ENCODE measurements at regions of chrX and their contacts with region 1.

Region 1: GRCh38 chrX:50100188-50100587 is 100.6 kb downstream of the AKAP4 start:
- DNase-seq: peak; percentile 28
- H3K4me3 Mint-ChIP-seq: no peak overlapping the region
- H3K27ac Mint-ChIP-seq: no peak overlapping the region
- H3K4me1 Mint-ChIP-seq: peaks cover 13% of the 10 kb centered on the region
- H3K27me3 Mint-ChIP-seq: no peaks in the 10 kb centered on the region
- CTCF ChIP-seq: no peak

Region 2: GRCh38 chrX:50448565-50448964 is 348.4 kb after region 1 on chrX:
- CTCF ChIA-PET with region 1: interaction called, 5 read pairs
- intact Hi-C with region 1: loop called (anchors 10 kb)
- DNase-seq: peak; percentile 63
- H3K4me3 Mint-ChIP-seq: no peak overlapping the region
- H3K27ac Mint-ChIP-seq: no peak overlapping the region
- H3K4me1 Mint-ChIP-seq: no peaks in the 10 kb centered on the region
- H3K27me3 Mint-ChIP-seq: peaks cover 2% of the 10 kb centered on the region
- CTCF ChIP-seq: no peak

Region 3: DNA sequence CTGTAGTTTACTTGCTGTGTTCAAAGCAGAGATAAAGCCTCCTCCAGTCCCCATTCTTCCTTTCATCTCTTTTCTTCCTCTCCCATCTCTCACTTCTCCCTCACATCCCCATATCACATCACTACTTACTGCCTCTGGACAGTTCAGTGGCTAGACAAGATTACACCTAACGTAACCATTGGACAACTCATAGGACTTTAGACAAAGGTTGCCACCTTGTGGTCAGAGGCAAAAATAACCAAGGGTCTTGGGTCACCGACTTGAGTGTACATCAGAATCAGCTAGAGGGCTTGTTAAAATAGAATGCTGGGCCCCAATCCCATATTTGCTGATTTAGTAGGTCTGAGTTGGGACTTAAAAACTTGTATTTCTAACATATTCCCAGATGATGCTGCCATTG is 479.8 kb after region 1 on chrX:
- CTCF ChIA-PET with region 1: interaction called, 10 read pairs
- intact Hi-C with region 1: loop called (anchors 1 kb)
- DNase-seq: peak; percentile 42
- H3K4me3 Mint-ChIP-seq: no peak overlapping the region
- H3K27ac Mint-ChIP-seq: no peak overlapping the region
- H3K4me1 Mint-ChIP-seq: no peaks in the 10 kb centered on the region
- H3K27me3 Mint-ChIP-seq: peaks cover 12% of the 10 kb centered on the region
- CTCF ChIP-seq: peak; percentile 25

Measured in Calu3 (cell line).